Testis (tissue), 5 donors: ENCODE measurements at regions of chr15 and their contacts with region 1.

Region 1: GRCh38 chr15:37572401-37572800 is 362.0 kb upstream of the TMCO5A start:
- DNase-seq: no peak
- H3K4me3 ChIP-seq: no peak overlapping the region
- H3K27ac ChIP-seq: no peak overlapping the region
- H3K4me1 ChIP-seq: no peaks in the 10 kb centered on the region
- H3K27me3 ChIP-seq: no peaks in the 10 kb centered on the region
- CTCF ChIP-seq: no peak
- POLR2A ChIP-seq: no peak

Region 2: GRCh38 chr15:37625576-37625975 is 53.2 kb after region 1 on chr15:
- intact Hi-C with region 1: loop called (anchors 10 kb)
- DNase-seq: no peak
- H3K4me3 ChIP-seq: no peak overlapping the region
- H3K27ac ChIP-seq: no peak overlapping the region
- H3K4me1 ChIP-seq: no peaks in the 10 kb centered on the region
- H3K27me3 ChIP-seq: no peaks in the 10 kb centered on the region
- CTCF ChIP-seq: no peak
- POLR2A ChIP-seq: no peak